ENCODE measurements at regions of chr11 and their contacts with region 1.

Region 1: GRCh38 chr11:73961321-73961720 is 10.5 kb downstream of the DNAJB13 start:
- DNase-seq: no peak
- ATAC-seq: no peak

Region 2: DNA sequence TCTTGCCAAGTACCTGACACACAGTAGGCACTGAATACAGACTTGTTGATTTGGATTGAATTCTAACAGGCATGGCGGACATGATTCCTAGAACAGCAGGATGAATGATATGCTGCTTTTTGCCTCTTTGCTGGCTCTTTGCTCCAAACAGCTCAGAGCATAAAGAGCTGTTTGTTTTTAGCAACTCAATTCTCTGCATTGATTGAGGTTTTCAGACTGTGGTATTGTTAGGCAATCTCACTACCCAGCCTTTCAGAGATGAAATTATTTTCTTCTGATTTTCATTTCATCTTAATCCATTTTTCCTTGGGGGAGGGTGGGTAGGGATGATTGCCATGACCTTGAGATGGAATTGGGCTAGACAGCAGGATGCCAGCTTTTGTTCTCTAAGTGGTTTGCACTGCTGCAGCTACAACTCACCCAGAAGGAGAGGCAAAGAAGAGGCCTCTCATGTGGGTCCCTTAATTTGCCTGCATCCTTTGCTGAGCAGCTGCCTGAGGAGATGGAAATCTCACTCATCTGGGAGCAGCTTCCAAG is 105.2 kb before region 1 on chr11:
- intact Hi-C with region 1: no loop called
- DNase-seq: no peak
- ATAC-seq: peak; percentile 42

Region 3: DNA sequence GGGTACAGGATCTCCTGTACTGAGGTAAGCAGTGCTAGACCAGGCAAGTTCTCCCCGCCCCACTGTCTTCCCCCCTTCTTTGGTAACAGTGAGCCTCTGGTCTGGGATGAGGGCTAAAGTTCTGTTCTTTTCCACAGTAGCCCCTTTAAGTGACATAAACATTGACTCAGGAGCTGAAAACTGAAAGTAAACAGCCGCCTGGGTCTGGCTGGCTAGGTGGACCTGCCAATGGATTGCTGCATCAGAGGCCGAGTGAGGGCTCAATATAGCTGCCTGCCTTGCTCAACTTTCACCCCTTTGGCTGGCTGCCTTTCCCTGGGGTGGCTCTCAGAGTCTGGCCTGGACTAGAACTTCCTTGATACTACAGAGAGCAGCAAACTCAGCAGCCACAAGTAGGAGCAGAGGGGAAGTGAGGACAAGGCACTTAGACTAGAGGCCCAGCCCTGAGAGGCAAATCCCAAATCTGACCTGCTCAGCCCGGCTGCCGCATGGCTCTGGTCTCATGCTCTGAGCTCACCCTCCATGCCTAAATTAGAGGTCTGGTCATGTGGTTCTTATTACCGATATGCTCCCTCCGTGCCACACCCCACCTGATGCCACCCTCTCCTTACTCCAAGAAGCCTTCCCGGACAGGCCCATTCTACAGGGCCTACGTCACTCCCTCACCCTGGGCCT is 57.1 kb after region 1 on chr11:
- intact Hi-C with region 1: loop called (anchors 5 kb)
- DNase-seq: peak; percentile 95
- ATAC-seq: peak; percentile 96

Region 4: DNA sequence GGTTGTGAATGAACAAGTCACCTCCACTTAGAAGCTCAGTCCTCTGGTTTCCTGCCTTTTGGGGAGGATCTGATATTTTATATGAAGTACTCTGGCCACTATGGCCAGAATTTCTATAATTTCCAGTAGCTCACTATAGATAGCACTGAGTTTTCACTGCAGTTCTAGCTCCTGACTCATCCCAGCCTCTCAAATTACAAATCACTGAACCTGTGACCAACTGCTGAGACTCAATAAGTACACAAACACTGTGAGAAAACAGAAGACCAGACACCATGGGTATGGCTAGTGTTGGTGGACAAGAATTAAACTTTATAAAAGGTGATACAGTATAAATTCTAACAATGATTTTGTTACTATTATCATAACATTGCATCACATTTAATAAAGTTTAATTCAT is 94.6 kb after region 1 on chr11:
- intact Hi-C with region 1: no loop called
- DNase-seq: no peak
- ATAC-seq: no peak

Region 5: DNA sequence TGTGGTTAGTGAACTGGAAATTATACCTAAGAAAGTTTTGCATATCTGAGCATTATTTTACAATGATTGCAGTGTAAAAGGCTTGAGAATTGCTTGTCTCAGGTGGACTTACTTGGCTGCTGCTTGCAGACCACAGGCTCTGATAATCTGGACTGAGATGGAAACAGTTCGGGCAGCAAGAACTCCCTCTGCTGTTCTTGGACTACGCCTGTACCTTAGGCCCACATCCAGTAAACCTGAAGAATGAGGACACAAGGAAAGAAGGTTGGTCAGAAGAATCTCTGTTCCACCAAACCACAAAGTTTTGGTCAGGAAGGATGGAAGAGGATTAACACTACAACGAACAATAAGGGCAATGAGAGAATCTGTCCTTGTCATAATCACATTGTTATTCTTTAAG is 129.4 kb after region 1 on chr11:
- intact Hi-C with region 1: loop called (anchors 5 kb)
- DNase-seq: no peak
- ATAC-seq: no peak